GM10248 (cell line): ENCODE measurements at regions of chr15 and their contacts with region 1.

Region 1: GRCh38 chr15:52256366-52256765 is 39.2 kb downstream of the MYO5C start:
- DNase-seq: peak; percentile 78
- CTCF ChIP-seq: peak; percentile 77

Region 2: DNA sequence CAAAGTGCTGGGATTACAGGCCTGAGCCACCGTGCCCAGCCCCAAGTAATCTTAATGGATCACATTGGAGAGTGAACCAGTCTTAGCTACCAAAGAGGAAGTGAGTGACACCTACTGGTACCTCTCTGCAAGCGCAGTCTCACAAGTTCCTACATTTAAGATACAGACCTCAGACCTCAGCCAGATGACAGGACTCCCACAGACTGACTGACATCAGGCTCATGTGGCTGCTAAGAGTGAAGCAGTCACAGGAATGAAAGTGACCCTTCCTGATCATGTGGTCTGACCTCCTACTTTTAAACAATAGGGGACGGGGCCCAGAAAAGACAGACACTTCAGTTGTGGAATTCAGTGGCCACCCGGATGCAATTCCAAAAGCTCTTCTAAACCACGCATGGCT is 28.9 kb before region 1 on chr15:
- CTCF ChIA-PET with region 1: interaction called, 11 read pairs
- POLR2A ChIA-PET with region 1: interaction called, 5 read pairs
- DNase-seq: peak; percentile 79
- CTCF ChIP-seq: peak; percentile 83

Region 3: GRCh38 chr15:52233405-52233804 is 23.0 kb before region 1 on chr15:
- CTCF ChIA-PET with region 1: interaction called, 11 read pairs
- POLR2A ChIA-PET with region 1: interaction called, 5 read pairs
- DNase-seq: peak; percentile 37
- CTCF ChIP-seq: no peak

Region 4: DNA sequence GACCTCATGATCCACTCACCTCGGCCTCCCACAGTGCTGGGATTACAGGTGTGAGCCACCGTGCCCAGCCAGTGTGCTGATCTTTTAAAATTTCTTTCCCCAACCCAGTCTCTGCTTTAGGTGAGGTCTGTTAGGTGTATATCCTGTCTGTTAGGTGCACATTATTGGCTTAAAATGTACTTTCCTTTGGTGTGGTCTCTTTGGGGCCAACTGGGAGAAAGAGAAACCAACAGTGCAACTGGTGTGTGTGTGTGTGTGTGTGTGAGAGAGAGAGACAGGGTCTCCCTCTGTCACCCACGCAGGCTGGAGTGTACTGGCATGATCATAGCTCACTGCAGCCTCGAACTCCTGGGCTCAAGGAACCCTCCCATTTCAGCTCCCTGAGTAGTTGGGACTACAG is 14.9 kb before region 1 on chr15:
- CTCF ChIA-PET with region 1: interaction called, 25 read pairs
- POLR2A ChIA-PET with region 1: no interaction called
- DNase-seq: no peak
- CTCF ChIP-seq: no peak

Region 5: GRCh38 chr15:52626671-52627369 is 370.5 kb after region 1 on chr15:
- CTCF ChIA-PET with region 1: no interaction called
- POLR2A ChIA-PET with region 1: no interaction called
- DNase-seq: no peak
- CTCF ChIP-seq: no peak

Region 6: DNA sequence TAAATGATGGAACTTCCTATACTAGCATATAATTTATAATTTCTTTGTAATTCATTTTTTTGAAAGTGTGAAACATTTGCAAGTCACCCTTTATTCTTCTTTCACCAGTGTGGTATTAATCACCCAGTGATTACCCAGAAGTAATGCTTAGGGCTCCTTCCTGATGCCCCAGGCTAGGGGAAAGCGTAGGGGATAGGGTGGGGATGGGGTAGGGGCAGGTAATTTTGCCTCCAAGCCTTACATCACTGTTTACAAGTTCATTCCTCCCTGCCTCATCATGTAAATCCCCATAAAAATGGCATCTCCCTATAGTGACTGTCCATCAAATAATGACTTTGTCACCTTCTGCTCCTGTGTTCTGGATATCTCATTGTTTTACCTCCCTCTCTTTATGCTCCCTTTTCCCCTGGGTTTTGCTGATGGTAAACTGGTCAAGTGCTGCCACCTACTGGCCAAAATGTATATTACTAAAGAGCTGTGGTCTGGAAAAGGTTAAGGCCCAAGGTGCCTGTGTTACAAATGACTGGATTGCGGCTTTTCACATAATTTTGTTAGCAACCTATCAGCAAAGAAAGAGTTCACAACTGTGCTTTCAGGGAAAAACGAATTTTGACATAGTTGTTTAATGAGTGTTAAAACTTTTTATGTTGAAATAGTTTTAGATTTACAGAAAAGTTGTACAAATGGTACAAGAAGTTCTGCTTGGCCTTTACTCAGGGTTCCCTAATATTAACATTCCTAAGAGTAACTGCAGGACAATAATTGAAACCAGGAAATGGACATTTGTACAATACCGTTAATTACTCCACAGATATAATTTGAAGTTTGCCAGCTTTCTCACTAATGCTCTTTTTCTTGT is 479.1 kb after region 1 on chr15:
- CTCF ChIA-PET with region 1: interaction called, 204 read pairs
- POLR2A ChIA-PET with region 1: no interaction called
- DNase-seq: peak; percentile 74
- CTCF ChIP-seq: peak; percentile 68